Psoas muscle (tissue), 8 donors: ENCODE measurements at regions of chr6 and their contacts with region 1.

Region 1: GRCh38 chr6:124924333-124924759 is 37.9 kb upstream of the RNF217 start:
- DNase-seq: no peak
- ATAC-seq: no peak
- H3K4me3 ChIP-seq: no peak overlapping the region
- H3K27ac ChIP-seq: no peak overlapping the region
- H3K4me1 ChIP-seq: no peaks in the 10 kb centered on the region
- H3K27me3 ChIP-seq: no peaks in the 10 kb centered on the region
- CTCF ChIP-seq: no peak

Region 2: DNA sequence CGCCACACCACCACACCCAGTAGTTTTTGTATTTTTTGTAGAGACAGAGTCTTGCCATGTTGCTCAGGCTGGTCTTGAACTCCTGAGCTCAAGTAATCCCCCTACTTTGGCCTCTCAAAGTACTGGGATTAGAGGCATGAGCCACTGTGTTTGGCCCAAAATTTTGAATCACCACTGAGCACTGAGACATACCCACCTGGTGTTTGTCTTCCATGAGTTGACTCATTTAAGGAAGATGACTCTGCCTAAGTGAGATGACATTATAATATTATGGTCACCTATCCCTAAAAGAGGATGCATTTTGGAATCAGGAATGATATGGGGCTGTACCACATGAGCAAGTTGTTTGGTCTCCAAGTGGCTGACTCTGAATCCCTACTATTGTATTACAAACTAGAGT is 16.8 kb before region 1 on chr6:
- intact Hi-C with region 1: loop called in 1 of 2 experiments (anchors 2 kb)
- DNase-seq: no peak
- ATAC-seq: peak in 1 of 4 donors; percentile 38
- H3K4me3 ChIP-seq: no peak overlapping the region
- H3K27ac ChIP-seq: no peak overlapping the region
- H3K4me1 ChIP-seq: no peaks in the 10 kb centered on the region
- H3K27me3 ChIP-seq: no peaks in the 10 kb centered on the region
- CTCF ChIP-seq: no peak